HAP-1 (cell line): ENCODE measurements at regions of chr22 and their contacts with region 1.

Region 1: DNA sequence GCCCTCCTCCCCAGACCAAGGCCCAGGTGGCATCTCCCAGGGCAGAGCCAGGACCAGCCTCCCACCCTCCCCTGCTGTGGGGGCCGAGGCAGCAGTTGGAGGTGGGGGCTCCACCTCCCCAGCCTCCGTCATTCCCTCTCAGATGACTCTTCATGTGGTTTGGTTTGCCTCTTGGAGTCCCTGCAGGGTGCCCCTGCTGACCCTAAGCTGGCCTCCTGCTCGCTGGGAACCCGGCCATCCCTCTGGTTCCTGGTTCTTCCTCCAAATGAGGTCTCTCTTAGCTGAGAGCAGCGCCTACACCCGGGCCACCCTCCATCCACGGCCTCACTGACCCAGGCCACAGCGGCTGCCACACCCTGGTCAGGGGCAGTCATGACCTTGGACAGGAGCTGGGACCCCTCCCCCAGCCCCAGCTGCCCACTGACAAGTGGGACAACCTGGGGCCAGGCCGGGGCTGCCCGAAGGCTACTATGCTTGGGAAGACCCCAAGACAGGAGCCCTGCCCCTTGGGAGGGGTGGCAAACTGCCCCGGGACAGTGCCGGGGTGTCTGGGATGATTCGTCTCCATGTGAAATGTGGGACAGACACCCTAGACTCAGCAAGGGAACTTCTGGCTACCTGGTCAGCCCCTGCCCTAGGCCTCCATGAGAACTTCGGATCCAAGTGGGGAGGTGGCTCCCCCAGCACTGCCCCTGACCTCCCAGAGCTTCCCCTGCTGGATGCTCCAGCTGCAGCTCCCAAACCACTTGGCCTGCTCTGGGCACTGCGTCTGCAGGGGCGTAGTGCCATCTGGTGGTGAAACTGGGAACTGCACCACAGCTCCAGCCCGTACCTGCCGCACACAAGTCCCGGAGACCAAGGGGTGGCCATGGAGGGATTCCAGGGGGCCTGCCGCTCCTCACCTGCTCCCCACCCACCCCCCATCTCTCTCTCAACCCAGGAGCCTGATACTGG is 194.5 kb downstream of the IGLL1 start:
- DNase-seq: peak; percentile 55 to 92
- H3K4me3 ChIP-seq: no peak overlapping the region
- H3K4me1 ChIP-seq: no peaks in the 10 kb centered on the region
- H3K27me3 ChIP-seq: no peaks in the 10 kb centered on the region

Region 2: DNA sequence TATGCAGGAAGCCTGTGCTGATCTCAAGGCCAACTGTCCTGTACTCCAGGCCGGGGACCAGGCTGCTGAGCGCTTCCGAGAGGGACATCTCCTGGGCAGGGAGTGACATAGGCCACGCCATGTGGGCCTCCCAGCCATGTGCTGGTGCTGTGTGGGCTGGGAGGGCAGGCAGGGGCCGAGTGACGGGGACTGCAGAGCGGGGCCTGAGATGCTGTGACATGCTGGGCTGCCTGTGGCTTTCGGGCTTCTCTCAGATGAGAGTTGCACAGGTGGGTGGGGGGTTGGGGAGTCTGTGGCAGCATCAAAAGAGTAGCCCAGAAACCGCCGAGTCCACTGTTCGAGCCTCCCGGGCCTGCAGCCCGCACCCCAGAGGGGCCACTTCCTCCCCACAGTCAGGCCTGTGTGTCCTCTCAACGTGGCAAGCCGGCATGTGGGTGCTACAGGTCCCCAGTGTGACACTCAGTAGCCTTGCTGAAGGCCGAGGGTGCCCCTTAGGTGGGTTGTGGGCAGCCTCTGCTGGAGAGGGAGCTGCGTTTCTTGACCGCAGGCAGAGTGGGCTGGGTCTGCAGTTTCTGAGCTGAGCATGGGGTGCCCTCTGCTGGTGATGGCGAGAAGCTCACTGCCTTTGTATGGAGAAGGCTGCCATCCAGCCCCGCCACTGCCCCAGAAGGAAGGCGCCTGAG is 104.0 kb before region 1 on chr22:
- in situ Hi-C with region 1: no loop called
- DNase-seq: peak; percentile 43 to 90
- H3K4me3 ChIP-seq: no peak overlapping the region
- H3K4me1 ChIP-seq: no peaks in the 10 kb centered on the region
- H3K27me3 ChIP-seq: no peaks in the 10 kb centered on the region

Region 3: DNA sequence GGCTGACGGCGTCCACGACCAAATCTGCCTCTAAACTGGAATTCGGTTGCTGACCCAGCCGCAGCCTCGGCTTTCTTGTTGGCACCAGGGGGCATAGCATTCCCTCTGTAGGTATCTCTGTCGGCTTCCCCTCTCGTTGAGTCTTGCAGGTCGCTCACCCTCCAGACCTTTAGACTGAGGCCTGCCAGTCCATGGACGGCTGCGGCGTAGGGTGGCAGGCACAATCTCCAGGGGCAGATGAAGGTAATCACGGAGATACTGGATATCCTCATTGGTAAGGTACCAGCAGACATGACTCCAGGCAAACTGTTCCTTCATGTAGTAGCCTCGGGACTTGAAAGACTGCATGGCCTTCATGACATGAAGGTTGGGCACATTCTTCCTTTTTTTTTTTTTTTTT is 63.0 kb before region 1 on chr22:
- in situ Hi-C with region 1: loop called (anchors 5 kb)
- DNase-seq: no peak
- H3K4me3 ChIP-seq: no peak overlapping the region
- H3K4me1 ChIP-seq: no peaks in the 10 kb centered on the region
- H3K27me3 ChIP-seq: no peaks in the 10 kb centered on the region